ENCODE measurements at regions of chr1 and their contacts with region 1.

Region 1: GRCh38 chr1:235075188-235075926 is 53.3 kb downstream of the TOMM20 start:
- DNase-seq: peak; percentile 34
- H3K4me3 Mint-ChIP-seq: peak overlapping the region; percentile 71
- H3K27ac Mint-ChIP-seq: peak overlapping the region; percentile 99
- H3K4me1 Mint-ChIP-seq: peaks cover 42% of the 10 kb centered on the region
- H3K27me3 Mint-ChIP-seq: no peaks in the 10 kb centered on the region

Region 2: DNA sequence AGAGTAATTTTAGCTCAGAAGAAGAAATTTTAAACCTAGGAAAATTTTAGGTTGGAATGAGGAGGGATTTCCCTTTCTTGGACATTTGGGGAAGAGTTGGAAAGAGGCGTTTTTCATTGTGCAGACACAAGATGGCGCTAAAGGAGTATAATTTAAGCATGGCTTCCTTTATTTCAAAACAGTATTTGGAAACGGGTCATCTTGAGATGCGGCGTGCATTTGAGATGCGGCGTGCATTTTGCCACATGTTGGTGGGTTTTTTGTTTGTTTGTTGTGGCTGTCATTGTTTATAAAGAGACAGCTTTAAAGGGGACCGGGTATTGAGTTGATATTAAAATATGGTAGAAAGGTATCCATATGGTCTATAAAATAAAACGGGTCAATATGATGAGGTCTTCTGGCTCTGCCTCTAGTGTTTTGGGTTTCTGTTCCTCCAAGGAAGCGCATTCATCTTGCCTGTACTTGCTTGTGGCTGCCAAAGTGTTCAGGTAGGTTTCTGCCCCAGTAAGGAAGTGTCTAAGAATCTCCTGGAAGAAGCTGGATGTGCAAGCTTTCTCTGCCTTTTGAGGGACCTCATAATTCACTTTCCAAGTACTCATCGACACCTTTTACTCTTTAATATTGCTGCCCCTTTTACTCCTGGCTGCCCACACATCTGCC is 960.6 kb before region 1 on chr1:
- intact Hi-C with region 1: loop called (anchors 10 kb)
- DNase-seq: no peak
- H3K4me3 Mint-ChIP-seq: peak overlapping the region; percentile 41
- H3K27ac Mint-ChIP-seq: no peak overlapping the region
- H3K4me1 Mint-ChIP-seq: peaks cover 8% of the 10 kb centered on the region
- H3K27me3 Mint-ChIP-seq: peaks cover 27% of the 10 kb centered on the region

Region 3: DNA sequence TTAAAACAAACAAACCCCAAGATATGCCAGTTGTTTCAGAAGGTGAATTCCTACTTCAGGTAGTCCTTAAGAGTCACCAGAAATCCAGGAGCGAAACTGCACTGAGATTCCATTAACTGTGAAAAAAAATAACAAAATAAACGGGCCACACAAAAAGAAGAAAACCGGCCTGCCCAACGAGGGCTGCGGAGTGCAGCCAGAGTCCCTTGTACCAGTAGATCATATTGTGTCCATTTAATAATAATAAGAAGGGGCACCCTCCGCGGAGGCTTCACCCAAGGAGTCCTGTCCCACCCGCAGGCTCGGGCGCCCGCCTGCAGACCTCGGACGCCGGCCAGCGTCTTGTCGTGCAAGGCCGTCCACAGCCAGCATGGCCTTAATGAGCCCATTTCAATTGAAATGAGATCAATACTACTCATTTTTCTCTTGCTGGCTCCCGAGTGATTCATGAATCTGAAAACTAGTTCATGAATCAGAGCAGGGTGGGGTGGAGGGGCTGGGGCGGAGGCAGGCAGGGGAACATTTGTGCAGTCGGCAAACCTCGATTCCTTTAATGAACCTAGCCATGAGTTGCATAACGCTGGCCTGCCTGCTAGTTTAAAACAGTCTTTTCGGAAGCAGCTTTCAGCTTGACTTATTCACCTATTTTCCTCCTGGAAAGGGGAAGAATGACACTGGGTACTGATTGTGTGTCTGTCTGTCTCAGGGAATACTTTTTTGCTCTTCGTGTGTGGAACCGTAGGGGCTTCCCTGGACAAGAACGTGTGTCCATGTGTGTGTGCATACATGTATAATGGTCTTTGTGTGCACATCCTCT is 352.2 kb before region 1 on chr1:
- intact Hi-C with region 1: loop called (anchors 1 kb)
- DNase-seq: peak; percentile 7
- H3K4me3 Mint-ChIP-seq: peak overlapping the region; percentile 70
- H3K27ac Mint-ChIP-seq: peak overlapping the region; percentile 97
- H3K4me1 Mint-ChIP-seq: peaks cover 79% of the 10 kb centered on the region
- H3K27me3 Mint-ChIP-seq: peaks cover 5% of the 10 kb centered on the region

Region 4: GRCh38 chr1:234842726-234843641 is 232.4 kb before region 1 on chr1:
- intact Hi-C with region 1: loop called (anchors 1 kb)
- DNase-seq: peak; percentile 67
- H3K4me3 Mint-ChIP-seq: peak overlapping the region; percentile 54
- H3K27ac Mint-ChIP-seq: peak overlapping the region; percentile 90
- H3K4me1 Mint-ChIP-seq: peaks cover 96% of the 10 kb centered on the region
- H3K27me3 Mint-ChIP-seq: peaks cover 3% of the 10 kb centered on the region

Region 5: DNA sequence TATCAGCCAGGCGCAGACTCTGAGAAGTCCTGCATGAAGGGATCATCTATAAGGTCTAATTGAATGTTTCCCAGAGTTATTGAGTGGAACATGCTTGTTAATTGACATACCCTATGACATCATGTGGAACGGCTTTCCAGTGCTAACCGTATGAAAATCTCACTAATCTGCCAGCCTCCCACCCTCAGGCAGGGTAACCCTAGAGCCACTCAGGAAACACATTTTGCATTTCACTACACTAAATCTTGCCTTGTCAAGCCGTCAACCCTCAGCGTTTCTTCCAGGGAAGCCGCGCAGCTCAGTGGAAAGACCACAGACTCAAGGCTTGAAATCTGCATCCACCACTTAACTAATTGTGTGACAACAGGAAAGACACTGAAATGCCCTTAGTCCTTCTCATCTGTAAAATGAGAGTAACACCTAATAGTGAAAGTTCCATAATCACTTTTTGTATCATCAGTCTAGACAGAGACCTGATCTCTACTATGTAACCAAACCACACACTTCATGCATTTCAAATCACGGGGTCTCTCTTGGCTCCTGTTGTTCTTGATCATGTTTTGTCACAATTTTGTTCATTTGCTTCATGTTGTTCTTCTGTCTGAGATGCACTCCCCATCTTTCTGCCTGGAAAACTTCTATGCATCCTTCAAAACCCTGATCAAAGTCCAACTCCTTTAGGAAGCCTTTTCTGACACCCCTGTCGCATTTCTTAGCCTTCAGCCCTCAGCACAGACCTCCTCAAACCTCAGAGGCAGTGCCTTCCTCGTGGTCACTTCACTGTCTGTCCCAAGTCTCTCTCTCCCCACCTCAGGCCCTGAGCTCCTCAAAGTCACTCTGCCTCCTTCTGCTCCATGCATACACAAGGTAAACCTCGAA is 193.2 kb before region 1 on chr1:
- intact Hi-C with region 1: loop called (anchors 2 kb)
- DNase-seq: no peak
- H3K4me3 Mint-ChIP-seq: no peak overlapping the region
- H3K27ac Mint-ChIP-seq: peak overlapping the region; percentile 47
- H3K4me1 Mint-ChIP-seq: peaks cover 69% of the 10 kb centered on the region
- H3K27me3 Mint-ChIP-seq: no peaks in the 10 kb centered on the region

Region 6: DNA sequence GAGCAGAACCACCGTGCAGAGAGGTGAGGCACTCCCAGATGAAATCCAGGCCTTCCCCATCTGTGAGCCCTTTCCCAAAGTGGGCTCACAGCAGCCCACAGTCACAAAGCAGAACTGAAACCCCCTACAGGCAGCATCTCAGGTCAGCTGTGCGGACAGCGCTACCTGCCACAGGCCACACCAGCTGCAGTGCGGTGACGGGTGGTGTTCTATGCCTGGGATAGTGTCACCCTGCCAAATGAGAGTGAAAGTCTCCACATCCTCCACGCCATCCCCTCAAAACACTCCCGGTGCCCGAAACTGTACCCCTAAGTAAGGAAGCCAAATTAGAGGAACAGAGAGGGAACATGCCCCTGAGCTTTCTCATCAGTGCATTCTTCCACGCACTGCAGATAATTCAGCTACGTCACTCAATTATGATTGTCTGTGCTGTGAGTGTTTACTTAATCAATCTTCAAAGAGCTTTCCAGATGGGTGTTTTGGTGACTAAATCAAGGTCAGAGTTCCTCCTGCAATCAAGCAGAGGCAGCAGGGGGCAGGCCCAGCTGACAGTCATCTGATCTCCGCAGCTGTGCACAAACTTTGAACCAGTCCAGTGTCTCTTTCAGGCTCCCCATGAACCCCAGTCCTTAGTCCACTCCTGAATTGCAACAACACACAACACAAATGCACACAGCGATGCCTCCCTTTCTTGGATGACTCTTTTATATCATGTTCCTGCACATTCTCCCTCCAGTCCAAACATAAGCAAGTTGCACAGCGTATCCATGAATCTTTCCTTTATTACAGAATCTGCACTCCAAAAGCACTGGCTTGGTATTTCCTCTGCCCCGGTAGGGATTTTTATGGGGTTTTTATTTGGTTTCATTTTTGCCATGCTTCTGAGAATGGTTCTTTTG is 96.7 kb before region 1 on chr1:
- intact Hi-C with region 1: loop called (anchors 1 kb)
- DNase-seq: no peak
- H3K4me3 Mint-ChIP-seq: peak overlapping the region; percentile 83
- H3K27ac Mint-ChIP-seq: peak overlapping the region; percentile 92
- H3K4me1 Mint-ChIP-seq: peaks cover 88% of the 10 kb centered on the region
- H3K27me3 Mint-ChIP-seq: no peaks in the 10 kb centered on the region

Region 7: DNA sequence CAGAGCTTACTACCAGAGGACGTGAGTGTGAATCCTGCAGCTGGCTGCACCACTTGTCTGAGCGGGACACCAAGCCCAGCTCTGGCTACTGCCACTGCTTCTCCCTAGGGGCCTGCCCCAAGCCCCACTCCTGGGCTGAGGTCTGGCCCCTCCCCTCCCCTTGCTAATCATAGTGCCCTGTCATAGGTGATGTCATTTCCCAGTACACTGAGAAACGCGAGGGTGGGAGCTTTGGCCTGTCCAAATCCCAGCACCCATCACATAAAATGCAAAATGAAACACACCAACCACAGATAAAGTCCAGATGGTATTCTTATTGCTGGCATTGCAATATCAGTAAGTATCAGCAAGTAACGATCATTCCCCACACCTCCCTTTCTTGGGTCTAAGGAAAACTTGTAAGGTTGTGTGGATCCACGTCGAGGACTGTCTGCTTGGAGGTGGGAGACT is 24.4 kb before region 1 on chr1:
- intact Hi-C with region 1: loop called (anchors 1 kb)
- DNase-seq: no peak
- H3K4me3 Mint-ChIP-seq: no peak overlapping the region
- H3K27ac Mint-ChIP-seq: peak overlapping the region; percentile 78
- H3K4me1 Mint-ChIP-seq: peaks cover 49% of the 10 kb centered on the region
- H3K27me3 Mint-ChIP-seq: no peaks in the 10 kb centered on the region

Measured in activated T-helper 1 cell treated with anti-CD3 and anti-CD28 coated beads, Interleukin-12 subunit alpha, Interleukin-12 subunit beta, Interleukin-2, Interleukin-4 antibody, amounts not matched to agents 30 ng/mL and 10 ng/mL and 1 ng/mL, durations not matched to agents 14 hours and 24 hours and 36 hours (primary cell).